Activated T-helper 2 cell treated with anti-CD3 and anti-CD28 coated beads, Interferon-gamma antibody, Interleukin-2, Interleukin-4, amounts not matched to agents 10 μg/mL and 5 μg/mL and 100 μg/mL, durations not matched to agents 14 hours and 24 hours and 36 hours (primary cell): ENCODE measurements at regions of chr1 and their contacts with region 1.

Region 1: GRCh38 chr1:84781946-84782771 is 91.9 kb upstream of the SSX2IP start:
- DNase-seq: peak; percentile 66
- H3K4me3 Mint-ChIP-seq: peak overlapping the region; percentile 67
- H3K27ac Mint-ChIP-seq: no peak overlapping the region
- H3K4me1 Mint-ChIP-seq: peaks cover 6% of the 10 kb centered on the region
- H3K27me3 Mint-ChIP-seq: peaks cover 6% of the 10 kb centered on the region

Region 2: GRCh38 chr1:84936116-84936810 is 154.1 kb after region 1 on chr1:
- intact Hi-C with region 1: loop called (anchors 2 kb)
- DNase-seq: no peak
- H3K4me3 Mint-ChIP-seq: no peak overlapping the region
- H3K27ac Mint-ChIP-seq: no peak overlapping the region
- H3K4me1 Mint-ChIP-seq: peaks cover 4% of the 10 kb centered on the region
- H3K27me3 Mint-ChIP-seq: no peaks in the 10 kb centered on the region